ENCODE measurements at regions of chr1 and their contacts with region 1.

Region 1: GRCh38 chr1:85307987-85308832 is 31.8 kb upstream of the BCL10 start:
- DNase-seq: peak; percentile 84

Region 2: DNA sequence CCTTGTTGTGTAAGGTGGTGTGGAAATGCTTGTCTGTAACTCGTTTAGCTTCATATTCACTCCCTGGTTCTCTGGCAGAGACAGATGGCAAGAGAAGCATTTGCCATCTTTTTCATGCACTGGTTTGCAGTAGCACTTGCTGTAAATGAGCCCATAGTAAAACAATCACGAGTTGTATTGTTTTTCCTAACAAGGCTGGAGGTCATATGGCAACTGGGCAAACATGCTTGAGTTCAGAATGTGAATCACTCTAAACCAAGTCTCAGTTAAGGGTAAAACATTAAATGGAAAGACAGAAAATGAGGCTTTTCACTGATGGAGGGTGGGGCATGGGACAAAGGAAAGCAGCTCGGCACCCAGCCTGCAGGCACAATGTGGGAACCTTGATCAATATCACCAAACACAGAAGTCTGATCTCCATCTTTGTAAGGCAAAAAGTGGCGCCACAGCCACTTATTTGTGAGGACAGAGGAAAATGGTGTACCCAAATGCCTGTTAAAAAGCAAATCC is 388.7 kb before region 1 on chr1:
- in situ Hi-C with region 1: no loop called
- DNase-seq: no peak

Region 3: GRCh38 chr1:85692730-85693314 is 384.6 kb after region 1 on chr1:
- in situ Hi-C with region 1: loop called (anchors 25 kb)
- DNase-seq: peak; percentile 38